ENCODE measurements at regions of chr1 and their contacts with region 1.

Region 1: GRCh38 chr1:212477014-212477679 is 44.4 kb downstream of the NENF start:
- DNase-seq: peak; percentile 85
- H3K4me3 Mint-ChIP-seq: no peak overlapping the region
- H3K27ac Mint-ChIP-seq: no peak overlapping the region
- H3K4me1 Mint-ChIP-seq: peaks cover 22% of the 10 kb centered on the region
- H3K27me3 Mint-ChIP-seq: peaks cover 49% of the 10 kb centered on the region

Region 2: GRCh38 chr1:212463565-212464285 is 13.4 kb before region 1 on chr1:
- CTCF ChIA-PET with region 1: interaction called, 20 read pairs
- DNase-seq: no peak
- H3K4me3 Mint-ChIP-seq: no peak overlapping the region
- H3K27ac Mint-ChIP-seq: no peak overlapping the region
- H3K4me1 Mint-ChIP-seq: peaks cover 6% of the 10 kb centered on the region
- H3K27me3 Mint-ChIP-seq: peaks cover 29% of the 10 kb centered on the region

Region 3: GRCh38 chr1:212488397-212489283 is 11.5 kb after region 1 on chr1:
- CTCF ChIA-PET with region 1: interaction called, 15 read pairs
- DNase-seq: no peak
- H3K4me3 Mint-ChIP-seq: no peak overlapping the region
- H3K27ac Mint-ChIP-seq: peak overlapping the region; percentile 25
- H3K4me1 Mint-ChIP-seq: no peaks in the 10 kb centered on the region
- H3K27me3 Mint-ChIP-seq: peaks cover 36% of the 10 kb centered on the region

Region 4: DNA sequence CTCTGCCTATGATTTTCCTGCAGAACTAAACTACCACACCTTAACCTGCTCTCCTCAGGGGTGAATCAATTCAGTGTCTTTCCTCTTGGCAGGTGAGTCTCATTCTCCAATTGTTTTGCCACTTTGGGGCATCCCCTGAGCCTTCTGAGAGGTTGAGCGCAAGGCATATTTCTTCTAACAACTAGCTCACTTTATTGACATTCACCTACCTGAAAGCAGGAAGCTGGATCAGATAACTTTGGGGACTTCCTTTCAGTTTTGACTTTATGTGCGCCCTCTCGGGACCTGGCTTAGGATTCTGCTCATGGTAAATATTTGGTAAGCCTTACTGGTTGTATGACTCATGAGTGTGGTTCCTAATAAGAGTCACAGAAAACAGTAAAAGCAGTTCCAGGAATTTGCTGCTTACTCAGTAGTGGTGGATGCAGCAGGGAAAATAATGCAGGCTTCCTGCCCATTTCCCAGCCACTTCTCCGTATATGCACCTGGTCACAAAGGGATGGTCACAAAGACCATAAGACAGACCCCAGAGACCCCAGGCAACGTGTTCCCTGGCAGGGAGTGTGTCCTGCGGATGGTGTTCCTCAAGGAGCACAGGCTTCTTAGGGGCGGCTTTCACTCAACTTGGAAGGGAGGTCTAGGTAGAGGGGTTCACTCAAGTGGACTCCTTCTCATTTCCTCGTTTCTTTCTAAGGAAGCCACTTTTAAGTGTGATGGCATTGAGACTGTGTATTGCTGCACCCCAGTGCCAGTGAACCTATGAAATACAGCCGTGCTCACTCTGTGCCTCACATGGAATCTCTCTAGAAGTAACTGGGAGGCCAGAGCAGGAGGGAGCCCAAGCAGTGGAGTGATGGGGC is 244.5 kb after region 1 on chr1:
- CTCF ChIA-PET with region 1: no interaction called
- DNase-seq: peak; percentile 49
- H3K4me3 Mint-ChIP-seq: peak overlapping the region; percentile 16
- H3K27ac Mint-ChIP-seq: peak overlapping the region; percentile 64
- H3K4me1 Mint-ChIP-seq: peaks cover 31% of the 10 kb centered on the region
- H3K27me3 Mint-ChIP-seq: peaks cover 4% of the 10 kb centered on the region

Region 5: DNA sequence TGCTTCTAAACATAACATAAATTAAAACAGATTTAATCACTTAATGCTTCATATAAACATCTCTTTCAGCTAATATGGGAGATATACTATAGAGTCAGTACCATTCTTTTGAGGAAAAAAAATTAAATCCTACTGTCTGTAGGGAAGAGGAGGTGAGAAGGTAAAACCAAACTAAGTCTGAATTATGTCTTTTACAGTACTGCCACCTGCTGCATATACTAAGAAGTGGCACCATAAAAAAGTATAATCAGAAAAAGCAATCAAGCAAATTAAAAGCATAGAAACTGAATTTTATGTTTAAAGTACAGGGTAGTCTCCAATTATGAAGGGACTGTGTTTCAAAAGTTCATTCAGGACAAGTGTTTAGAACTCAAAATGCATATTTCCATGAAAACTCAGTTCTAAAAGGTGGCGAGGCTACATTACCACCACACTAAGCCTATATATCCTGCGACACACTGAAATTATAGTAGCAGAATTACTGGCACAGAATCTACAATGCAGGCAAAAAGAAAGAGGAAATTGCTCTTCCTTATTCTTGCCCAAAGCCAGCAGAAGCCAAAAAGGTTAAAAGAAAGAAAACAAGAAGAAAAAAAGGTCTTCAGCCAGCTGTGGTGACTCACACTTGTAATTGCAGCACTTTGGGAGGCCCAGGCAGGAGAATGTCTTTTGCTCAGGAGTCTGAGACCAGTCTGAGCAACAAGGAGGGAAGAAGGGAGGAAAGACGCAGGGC is 305.4 kb after region 1 on chr1:
- CTCF ChIA-PET with region 1: interaction called, 12 read pairs
- DNase-seq: no peak
- H3K4me3 Mint-ChIP-seq: no peak overlapping the region
- H3K27ac Mint-ChIP-seq: no peak overlapping the region
- H3K4me1 Mint-ChIP-seq: no peaks in the 10 kb centered on the region
- H3K27me3 Mint-ChIP-seq: no peaks in the 10 kb centered on the region